ENCODE measurements at regions of chr12 and their contacts with region 1.

Region 1: DNA sequence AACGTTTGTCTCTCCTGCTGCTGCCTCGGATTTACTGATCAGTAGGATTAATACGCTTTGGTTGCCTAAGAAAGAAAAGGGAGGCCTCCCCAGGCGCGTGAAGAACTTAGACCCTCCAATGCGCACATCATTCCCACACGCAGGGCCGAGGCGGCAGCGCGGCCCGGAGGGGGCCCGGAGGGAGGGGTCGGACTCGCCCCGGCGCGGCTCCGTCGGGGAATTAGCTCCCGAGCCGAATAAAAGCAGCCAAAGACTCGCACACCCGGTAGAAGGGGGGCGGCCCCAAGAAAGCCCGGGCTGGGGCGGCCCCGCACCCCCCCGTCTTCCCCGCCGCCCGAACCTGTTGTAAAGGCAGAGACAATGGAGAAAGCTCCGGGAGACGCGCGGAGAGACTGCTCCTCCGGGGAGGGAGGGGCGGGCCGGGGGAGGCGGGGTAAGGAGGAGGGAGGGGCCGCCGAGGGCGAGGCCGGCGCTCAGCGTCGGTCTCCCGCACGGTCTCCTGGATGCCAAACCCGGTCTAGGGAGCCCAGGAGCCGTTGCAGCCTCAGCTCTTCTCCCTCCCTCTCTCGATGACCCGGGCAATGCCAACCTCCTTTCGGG is at the start of gene NELL2:
- DNase-seq: peak; percentile 83
- H3K4me3 Mint-ChIP-seq: peak within 1 kb of the TSS; percentile 93
- H3K27ac Mint-ChIP-seq: peak within 1 kb of the TSS; percentile 89
- H3K4me1 Mint-ChIP-seq: peaks cover 39% of the 10 kb centered on the region
- H3K27me3 Mint-ChIP-seq: peaks cover 39% of the 10 kb centered on the region
- total RNA-seq, gene NELL2: 20.0 and 27.5 TPM in 2 replicates

Region 2: DNA sequence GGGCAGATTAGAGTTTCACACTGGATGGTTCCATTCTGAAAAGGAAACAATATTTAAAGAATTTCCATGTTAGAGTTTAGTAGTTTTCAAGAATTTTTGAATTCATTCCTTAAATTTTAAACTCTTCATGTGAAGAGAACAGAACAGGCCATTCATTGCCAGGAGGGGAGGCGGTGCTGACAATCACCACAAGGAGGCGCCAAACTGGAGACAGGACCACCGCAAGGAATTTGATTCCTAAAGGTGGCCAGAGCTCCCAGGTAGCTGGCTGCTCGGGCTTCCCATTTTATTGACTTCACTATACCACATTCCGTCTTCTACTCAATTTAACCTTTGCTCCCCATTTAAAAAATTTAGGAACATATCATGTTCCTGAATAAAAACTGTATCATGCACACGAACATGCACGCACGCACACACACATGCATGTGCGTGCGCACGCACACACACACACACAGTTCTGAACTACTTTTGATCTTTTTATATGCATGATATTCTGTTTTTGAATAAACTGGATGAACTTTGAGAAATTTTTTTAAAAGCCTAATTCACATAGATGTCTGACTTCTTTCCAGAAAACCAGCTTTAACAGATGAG is 101.1 kb before region 1 on chr12:
- intact Hi-C with region 1: loop called (anchors 1 kb)
- DNase-seq: peak; percentile 86
- H3K4me3 Mint-ChIP-seq: no peak overlapping the region
- H3K27ac Mint-ChIP-seq: no peak overlapping the region
- H3K4me1 Mint-ChIP-seq: peaks cover 5% of the 10 kb centered on the region
- H3K27me3 Mint-ChIP-seq: no peaks in the 10 kb centered on the region

Region 3: GRCh38 chr12:44812062-44812461 is 64.0 kb before region 1 on chr12:
- intact Hi-C with region 1: loop called (anchors 1 kb)
- DNase-seq: peak; percentile 87
- H3K4me3 Mint-ChIP-seq: no peak overlapping the region
- H3K27ac Mint-ChIP-seq: no peak overlapping the region
- H3K4me1 Mint-ChIP-seq: peaks cover 21% of the 10 kb centered on the region
- H3K27me3 Mint-ChIP-seq: no peaks in the 10 kb centered on the region

Region 4: DNA sequence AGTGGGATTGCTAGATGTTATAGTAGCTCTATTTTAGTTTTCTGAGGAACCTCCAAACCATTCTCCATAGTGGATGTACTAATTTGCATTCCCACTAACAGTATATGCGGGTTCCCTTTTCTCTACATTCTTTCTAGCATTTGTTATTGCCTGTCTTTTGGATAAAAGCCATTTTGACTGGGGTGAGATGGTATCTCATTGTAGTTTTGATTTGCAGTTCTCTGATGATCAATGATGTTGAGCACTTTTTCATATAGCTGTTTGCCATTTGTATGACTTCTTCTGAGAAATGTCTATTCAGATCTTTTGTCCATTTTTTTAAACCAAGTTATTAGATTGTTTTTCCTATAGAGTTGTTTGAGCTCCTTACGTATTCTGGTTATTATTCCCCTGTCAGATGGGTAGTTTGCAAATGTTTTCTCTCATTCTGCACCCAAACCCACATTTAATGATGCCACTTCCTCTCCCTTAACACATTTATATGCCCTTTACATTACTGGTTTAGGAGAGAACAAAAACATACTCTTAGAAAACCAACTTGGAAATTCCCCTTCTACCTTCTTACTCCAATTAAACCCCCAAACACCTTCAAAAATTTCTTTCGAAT is 48.1 kb before region 1 on chr12:
- intact Hi-C with region 1: loop called (anchors 1 kb)
- DNase-seq: no peak
- H3K4me3 Mint-ChIP-seq: peak overlapping the region; percentile 64
- H3K27ac Mint-ChIP-seq: peak overlapping the region; percentile 83
- H3K4me1 Mint-ChIP-seq: peaks cover 39% of the 10 kb centered on the region
- H3K27me3 Mint-ChIP-seq: no peaks in the 10 kb centered on the region